Activated T-helper 1 cell treated with anti-CD3 and anti-CD28 coated beads, Interleukin-12 subunit alpha, Interleukin-12 subunit beta, Interleukin-2, Interleukin-4 antibody, amounts not matched to agents 30 ng/mL and 10 ng/mL and 1 ng/mL, durations not matched to agents 14 hours and 24 hours and 36 hours (primary cell): ENCODE measurements at regions of chr3 and their contacts with region 1.

Region 1: DNA sequence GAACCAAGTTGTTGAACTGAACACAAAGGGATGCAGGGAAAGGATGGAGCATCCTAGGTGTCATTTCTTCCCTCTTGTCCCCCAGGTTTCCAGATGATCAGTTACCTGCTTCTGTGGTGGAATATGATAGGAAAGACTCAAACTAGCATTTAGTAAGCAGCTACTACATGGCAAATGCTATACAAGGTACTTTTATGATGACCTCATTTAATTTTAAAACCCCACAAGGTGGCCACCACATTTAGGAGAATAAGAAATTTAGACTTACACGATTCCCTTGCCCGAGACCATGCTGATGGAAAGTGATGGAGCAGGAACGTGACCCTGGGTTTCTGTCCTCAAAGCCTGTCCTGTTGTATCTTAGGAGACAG is 40.9 kb downstream of the CCR4 start:
- DNase-seq: no peak
- H3K4me3 Mint-ChIP-seq: peak overlapping the region; percentile 73
- H3K27ac Mint-ChIP-seq: peak overlapping the region; percentile 93
- H3K4me1 Mint-ChIP-seq: peaks cover 69% of the 10 kb centered on the region
- H3K27me3 Mint-ChIP-seq: no peaks in the 10 kb centered on the region

Region 2: GRCh38 chr3:32947789-32948238 is 44.5 kb before region 1 on chr3:
- intact Hi-C with region 1: loop called (anchors 1 kb)
- DNase-seq: peak; percentile 83
- H3K4me3 Mint-ChIP-seq: no peak overlapping the region
- H3K27ac Mint-ChIP-seq: peak overlapping the region; percentile 44
- H3K4me1 Mint-ChIP-seq: peaks cover 48% of the 10 kb centered on the region
- H3K27me3 Mint-ChIP-seq: peaks cover 2% of the 10 kb centered on the region

Region 3: DNA sequence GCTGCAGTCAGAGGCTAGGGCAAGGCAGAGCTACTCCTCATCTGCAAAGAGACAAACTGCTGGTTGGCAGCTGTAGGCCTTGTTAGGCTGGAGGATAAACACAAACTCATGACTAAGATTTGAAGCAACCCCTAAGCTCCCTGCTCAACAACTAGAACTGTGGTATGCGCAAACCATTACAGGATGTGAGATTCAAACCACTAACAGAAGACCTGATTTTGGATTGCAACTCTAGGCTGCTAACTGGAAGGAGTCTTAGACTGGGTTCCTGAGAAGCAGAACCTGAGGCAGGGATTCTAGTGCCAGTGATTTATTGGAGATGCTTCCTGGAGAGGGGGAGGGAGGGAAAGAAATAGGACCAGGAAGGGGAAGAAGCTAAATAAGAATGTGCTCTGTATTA is 18.3 kb before region 1 on chr3:
- intact Hi-C with region 1: loop called (anchors 1 kb)
- DNase-seq: peak; percentile 46
- H3K4me3 Mint-ChIP-seq: no peak overlapping the region
- H3K27ac Mint-ChIP-seq: peak overlapping the region; percentile 56
- H3K4me1 Mint-ChIP-seq: peaks cover 62% of the 10 kb centered on the region
- H3K27me3 Mint-ChIP-seq: peaks cover 2% of the 10 kb centered on the region

Region 4: GRCh38 chr3:33023172-33024136 is 31.1 kb after region 1 on chr3:
- intact Hi-C with region 1: loop called (anchors 1 kb)
- DNase-seq: no peak
- H3K4me3 Mint-ChIP-seq: peak overlapping the region; percentile 28
- H3K27ac Mint-ChIP-seq: peak overlapping the region; percentile 94
- H3K4me1 Mint-ChIP-seq: peaks cover 56% of the 10 kb centered on the region
- H3K27me3 Mint-ChIP-seq: peaks cover 1% of the 10 kb centered on the region

Region 5: DNA sequence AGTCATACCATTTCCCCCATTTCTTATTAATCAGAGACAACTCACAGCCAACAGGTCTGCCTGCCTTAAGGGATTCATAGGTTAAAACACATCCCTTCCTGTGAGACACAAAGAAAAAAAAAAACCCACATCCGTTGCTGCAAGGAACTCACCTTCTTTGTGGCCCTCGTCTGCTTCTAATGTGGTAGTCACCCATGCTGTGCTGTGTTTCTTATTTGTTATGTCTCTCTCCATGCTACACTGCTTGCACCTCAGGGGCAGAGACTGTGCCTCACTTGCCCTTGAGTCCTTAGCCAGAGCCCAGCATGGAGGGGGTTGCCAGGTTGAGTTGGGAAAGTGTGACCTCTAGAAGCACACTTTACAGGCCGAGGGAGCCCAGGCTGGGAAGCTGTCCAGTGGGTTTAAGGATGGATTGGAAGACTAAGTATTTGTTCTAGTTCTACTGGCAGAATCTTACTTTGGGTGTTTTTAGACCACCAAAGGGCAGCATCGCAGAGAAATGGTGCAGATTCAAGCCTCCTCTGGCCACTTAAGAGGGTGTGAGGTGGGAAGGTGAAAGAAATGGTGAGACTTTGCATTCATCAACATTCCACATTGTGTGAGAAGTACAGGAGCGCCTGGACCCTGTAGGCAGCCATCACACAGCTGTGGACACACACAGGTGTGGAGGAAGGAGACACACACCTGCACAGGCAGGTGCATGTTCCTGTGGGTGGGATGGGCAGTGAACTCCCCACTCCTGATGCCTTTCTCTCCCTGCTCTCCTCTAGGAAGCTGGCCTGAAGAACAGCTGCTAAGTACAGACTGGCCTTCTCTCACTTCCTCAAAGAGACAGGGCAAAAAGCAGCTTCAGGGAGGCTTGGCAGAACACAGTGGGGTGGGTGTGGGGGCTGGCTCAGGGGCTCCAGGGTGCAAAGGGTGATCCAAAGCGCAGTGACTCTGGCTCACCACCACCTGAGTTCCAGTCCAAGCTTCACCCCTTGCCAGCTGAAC is 55.8 kb after region 1 on chr3:
- intact Hi-C with region 1: loop called (anchors 1 kb)
- DNase-seq: peak; percentile 70
- H3K4me3 Mint-ChIP-seq: peak overlapping the region; percentile 80
- H3K27ac Mint-ChIP-seq: peak overlapping the region; percentile 99
- H3K4me1 Mint-ChIP-seq: peaks cover 81% of the 10 kb centered on the region
- H3K27me3 Mint-ChIP-seq: peaks cover 1% of the 10 kb centered on the region

Region 6: DNA sequence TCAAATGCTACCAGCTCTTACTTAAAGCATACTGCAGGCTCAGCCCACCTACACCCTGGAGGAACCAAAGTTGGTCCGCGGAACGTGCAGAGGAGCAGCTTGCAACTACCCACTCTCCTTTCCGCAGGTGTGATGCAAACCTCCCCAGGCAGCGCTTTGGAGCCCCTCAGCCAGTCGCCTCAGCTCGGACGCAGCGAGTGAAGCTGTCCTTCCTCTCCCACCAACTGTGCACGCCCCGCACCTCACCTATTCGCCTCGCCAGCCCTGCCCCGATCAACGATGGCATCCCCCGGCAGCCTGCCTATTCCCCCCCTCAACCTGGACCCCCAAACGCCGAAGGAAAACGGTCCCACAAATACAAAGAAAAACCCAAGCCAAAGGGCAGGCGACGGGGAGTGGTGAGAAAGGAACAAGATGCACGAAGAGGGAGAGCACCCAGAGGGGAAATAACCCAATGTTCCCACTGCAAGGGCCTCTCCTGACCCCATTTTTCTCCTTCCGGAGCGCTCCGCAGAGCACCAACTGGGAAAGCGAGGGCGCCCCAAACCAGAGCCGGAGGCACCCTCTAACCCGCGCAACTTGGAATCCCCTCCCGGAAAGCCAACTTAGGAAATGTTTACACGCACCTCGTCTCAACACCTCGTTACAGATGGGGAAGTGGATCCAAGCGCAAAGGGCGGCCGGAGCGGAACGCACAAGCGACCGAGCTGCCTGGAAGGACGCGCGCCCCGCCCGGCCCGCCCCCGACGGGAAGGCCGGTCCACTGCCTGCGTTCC is 104.0 kb after region 1 on chr3:
- intact Hi-C with region 1: loop called (anchors 1 kb)
- DNase-seq: peak; percentile 39
- H3K4me3 Mint-ChIP-seq: peak overlapping the region; percentile 97
- H3K27ac Mint-ChIP-seq: peak overlapping the region; percentile 86
- H3K4me1 Mint-ChIP-seq: peaks cover 43% of the 10 kb centered on the region
- H3K27me3 Mint-ChIP-seq: peaks cover 2% of the 10 kb centered on the region

Region 7: DNA sequence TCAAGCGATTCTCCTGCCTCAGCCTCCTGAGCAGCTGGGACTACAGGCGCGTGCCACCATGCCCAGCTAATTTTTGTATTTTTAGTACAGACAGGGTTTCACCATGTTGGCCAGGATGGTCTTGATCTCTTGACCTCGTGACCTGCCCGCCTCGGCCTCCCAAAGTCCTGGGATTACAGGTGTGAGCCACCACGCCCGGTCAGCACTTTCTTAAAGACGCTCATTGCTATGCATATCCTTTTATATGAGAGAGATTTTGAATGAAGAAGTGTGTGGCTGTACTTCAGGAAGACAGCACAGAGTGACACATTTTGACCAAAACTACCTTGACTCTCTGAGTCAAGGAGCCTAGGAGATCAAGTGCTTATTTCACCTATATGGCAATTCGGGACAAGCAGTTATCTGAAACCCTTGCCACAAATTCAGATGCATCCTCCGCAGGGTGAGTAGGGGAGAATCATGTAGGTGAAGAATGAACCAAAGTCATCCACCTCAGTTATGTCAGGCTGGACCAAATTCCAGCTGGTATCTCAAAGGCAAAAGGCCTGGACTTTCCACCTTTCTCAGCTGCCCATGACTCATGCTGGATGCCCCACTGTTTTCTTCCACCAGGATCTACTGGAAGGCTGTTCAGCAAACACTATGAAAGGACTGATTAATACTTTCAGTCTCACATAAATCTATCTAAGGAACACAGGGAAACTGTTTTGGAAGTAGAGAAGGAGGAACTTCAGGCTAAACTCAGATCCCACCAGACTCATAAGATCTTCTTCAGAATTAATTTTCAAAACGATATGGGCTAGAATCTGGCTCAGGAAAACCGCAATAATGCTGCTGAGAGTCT is 194.4 kb after region 1 on chr3:
- intact Hi-C with region 1: no loop called
- DNase-seq: no peak
- H3K4me3 Mint-ChIP-seq: no peak overlapping the region
- H3K27ac Mint-ChIP-seq: no peak overlapping the region
- H3K4me1 Mint-ChIP-seq: no peaks in the 10 kb centered on the region
- H3K27me3 Mint-ChIP-seq: peaks cover 1% of the 10 kb centered on the region